MCF 10A (cell line): ENCODE measurements at regions of chr1 and their contacts with region 1.

Region 1: DNA sequence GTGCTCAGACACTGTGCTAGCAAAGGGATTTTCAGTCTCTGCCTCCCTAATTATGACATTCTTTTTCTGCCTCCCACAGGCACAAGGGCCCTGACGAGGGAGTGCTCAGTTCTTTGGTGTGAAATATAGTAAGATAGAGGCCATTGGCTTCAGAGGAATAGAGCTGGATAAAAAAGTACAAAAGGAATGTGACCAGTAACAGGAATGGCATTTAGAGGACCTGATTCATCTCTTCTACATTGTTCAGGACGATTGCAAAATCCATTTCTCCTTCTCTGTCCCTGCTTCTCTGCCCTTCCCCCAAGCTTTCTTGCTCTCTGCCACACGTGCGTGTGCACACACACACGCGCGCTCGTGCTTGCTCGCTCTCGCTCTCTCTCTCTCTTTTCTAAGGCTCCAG is 668.2 kb downstream of the KIF26B start:
- DNase-seq: peak; percentile 89
- H3K4me3 Mint-ChIP-seq: no peak overlapping the region
- H3K27ac Mint-ChIP-seq: peak overlapping the region; percentile 47
- H3K4me1 Mint-ChIP-seq: peaks cover 14% of the 10 kb centered on the region
- H3K27me3 Mint-ChIP-seq: no peaks in the 10 kb centered on the region
- CTCF ChIP-seq: no peak

Region 2: GRCh38 chr1:245788269-245788668 is 34.7 kb before region 1 on chr1:
- CTCF ChIA-PET with region 1: no interaction called
- POLR2A ChIA-PET with region 1: interaction called, 4 read pairs
- intact Hi-C with region 1: loop called (anchors 2 kb)
- DNase-seq: peak; percentile 87
- H3K4me3 Mint-ChIP-seq: no peak overlapping the region
- H3K27ac Mint-ChIP-seq: peak overlapping the region; percentile 78
- H3K4me1 Mint-ChIP-seq: peaks cover 20% of the 10 kb centered on the region
- H3K27me3 Mint-ChIP-seq: no peaks in the 10 kb centered on the region
- CTCF ChIP-seq: no peak

Region 3: DNA sequence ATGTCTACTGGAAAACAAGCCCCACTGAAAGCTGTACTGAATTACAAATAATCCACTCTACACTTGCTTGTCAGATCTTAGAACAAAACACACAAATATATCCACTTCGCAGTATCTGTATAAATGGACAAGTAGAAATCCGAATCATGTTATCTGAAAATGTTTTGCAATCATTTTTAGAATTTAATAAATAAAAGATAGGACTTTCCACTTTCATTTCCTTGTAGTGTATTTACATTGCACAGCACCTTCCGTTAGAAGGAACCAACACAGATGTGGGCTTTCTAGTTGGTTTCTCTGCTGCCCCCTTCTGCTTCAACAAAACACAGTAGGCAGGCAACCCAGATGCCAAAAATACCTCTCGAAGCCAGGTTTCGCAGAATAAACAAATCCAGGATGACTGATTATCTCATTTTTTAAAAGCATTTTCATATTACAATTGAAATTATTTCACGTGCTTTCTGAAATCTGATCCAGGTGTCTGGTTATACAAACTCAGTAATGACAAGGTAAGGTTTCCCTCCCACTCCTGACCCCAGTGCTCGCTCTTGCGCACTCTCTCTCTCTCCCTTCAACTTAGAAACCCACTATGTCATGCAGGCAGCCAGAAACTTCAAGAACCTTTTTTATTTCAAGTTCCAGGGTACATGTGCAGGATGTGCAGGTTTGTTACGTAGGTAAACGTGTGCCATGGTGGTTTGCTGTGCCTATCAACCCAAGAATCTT is 294.2 kb after region 1 on chr1:
- CTCF ChIA-PET with region 1: no interaction called
- POLR2A ChIA-PET with region 1: no interaction called
- intact Hi-C with region 1: no loop called
- DNase-seq: peak; percentile 61
- H3K4me3 Mint-ChIP-seq: no peak overlapping the region
- H3K27ac Mint-ChIP-seq: no peak overlapping the region
- H3K4me1 Mint-ChIP-seq: no peaks in the 10 kb centered on the region
- H3K27me3 Mint-ChIP-seq: no peaks in the 10 kb centered on the region
- CTCF ChIP-seq: peak; percentile 45